K562 (cell line): ENCODE measurements at regions of chr9 and their contacts with region 1.

Region 1: GRCh38 chr9:98860871-98861293 is 53.4 kb downstream of the GALNT12 start:
- DNase-seq: peak in 2 of 4 experiments; percentile 60 to 66
- ATAC-seq: peak; percentile 89
- H3K4me3 ChIP-seq: no peak overlapping the region
- H3K27ac ChIP-seq: no peak overlapping the region
- H3K4me1 ChIP-seq: peaks cover 0 to 13% of the 10 kb centered on the region in 2 experiments; a peak in 3 of 5 replicates
- H3K27me3 ChIP-seq: no peaks in the 10 kb centered on the region
- CTCF ChIP-seq: peak; percentile 70 to 84 (median 75)
- EP300 ChIP-seq: no peak
- POLR2A ChIP-seq: no peak
- RAD21 ChIP-seq: peak; percentile 96

Region 2: GRCh38 chr9:98654247-98654646 is 206.6 kb before region 1 on chr9:
- CTCF ChIA-PET with region 1: no interaction called
- POLR2A ChIA-PET with region 1: no interaction called
- in situ Hi-C with region 1: no loop called
- intact Hi-C with region 1: no loop called
- DNase-seq: no peak
- ATAC-seq: no peak
- H3K4me3 ChIP-seq: no peak overlapping the region
- H3K27ac ChIP-seq: no peak overlapping the region
- H3K4me1 ChIP-seq: no peaks in the 10 kb centered on the region
- H3K27me3 ChIP-seq: peaks cover 18 to 26% of the 10 kb centered on the region in 2 experiments
- CTCF ChIP-seq: no peak
- EP300 ChIP-seq: no peak
- POLR2A ChIP-seq: no peak
- RAD21 ChIP-seq: no peak

Region 3: DNA sequence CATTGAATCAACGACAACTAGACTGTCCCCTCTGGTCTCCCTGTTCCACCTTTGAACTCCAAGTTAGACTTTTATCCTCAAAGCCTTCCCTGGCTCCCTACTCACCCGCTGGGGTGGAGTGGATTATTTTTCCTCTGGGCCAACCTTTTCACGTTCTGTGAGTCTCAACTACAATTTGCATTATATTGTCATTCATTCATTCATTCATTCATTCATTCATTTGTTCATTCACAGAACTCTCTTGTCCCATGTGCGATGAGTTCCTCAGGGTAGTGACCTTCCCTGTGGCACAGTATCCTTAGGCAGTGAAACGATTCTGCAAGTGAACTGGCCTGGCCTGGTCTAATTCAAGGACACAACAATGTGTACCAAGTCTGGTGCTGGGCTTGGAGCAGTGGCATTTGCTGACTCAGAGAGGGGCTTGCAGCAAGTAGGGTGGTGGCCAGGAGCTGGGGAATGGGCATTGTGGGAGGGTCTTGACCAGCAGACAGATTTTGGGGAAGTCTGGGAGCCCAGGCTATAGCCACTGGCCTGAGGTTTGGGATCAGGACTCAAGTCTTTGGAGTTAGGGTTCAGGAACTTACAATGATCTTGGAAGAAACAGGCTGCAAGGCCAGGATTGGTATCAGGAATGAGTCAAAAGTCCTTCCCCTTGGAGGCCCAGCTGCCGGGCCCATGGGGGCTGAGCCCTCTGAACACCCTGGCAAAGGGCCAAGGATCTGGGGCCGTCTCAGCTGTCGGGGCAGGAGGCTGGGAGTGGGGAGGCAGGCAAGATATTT is 45.6 kb after region 1 on chr9:
- CTCF ChIA-PET with region 1: no interaction called
- POLR2A ChIA-PET with region 1: no interaction called
- in situ Hi-C with region 1: no loop called
- intact Hi-C with region 1: loop called (anchors 2 kb)
- DNase-seq: peak; percentile 63 to 84 (median 68)
- ATAC-seq: peak; percentile 68
- H3K4me3 ChIP-seq: no peak overlapping the region
- H3K27ac ChIP-seq: no peak overlapping the region
- H3K4me1 ChIP-seq: peaks cover 7 to 39% of the 10 kb centered on the region in 2 experiments
- H3K27me3 ChIP-seq: no peaks in the 10 kb centered on the region
- CTCF ChIP-seq: no peak
- EP300 ChIP-seq: no peak
- POLR2A ChIP-seq: no peak
- RAD21 ChIP-seq: no peak

Region 4: DNA sequence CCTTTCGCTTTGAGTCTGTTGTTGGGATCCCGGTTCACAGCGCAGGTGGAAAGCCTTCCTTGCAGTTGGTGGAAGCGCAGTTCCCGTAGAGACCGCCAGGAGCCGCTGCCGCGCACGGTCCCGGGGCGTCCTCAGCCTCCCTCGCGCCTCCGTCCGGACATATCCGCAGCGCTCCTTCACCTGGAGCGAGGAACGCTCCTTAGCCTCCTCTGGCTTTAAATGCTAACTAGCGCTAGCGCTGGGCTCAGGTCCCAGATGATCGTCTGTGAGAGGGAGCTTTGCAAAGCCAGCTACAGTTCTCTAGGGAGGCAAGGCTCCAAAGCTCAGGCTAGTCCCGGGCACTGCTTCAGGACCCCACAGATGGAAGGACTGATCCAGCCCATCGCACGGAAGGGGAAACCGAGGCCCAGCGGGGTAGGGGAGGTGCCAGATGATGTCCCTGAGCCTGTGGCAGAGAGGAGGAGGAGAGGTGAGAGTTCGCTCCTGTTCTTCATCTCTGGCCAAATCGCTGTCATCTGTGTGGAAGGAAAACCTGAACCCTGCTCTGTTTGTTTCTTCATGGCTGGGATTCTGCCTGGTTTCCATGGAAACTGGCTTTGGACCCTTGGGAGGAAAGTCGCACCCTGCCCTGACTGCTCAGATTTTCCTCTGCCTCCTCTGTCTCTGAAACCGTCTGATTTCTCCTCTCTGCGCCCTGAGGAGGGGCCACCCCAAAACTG is 114.3 kb after region 1 on chr9:
- CTCF ChIA-PET with region 1: interaction called, 4 read pairs
- POLR2A ChIA-PET with region 1: no interaction called
- in situ Hi-C with region 1: no loop called
- intact Hi-C with region 1: loop called (anchors 1 kb)
- DNase-seq: peak; percentile 88 to 91 (median 90)
- ATAC-seq: peak; percentile 92
- H3K4me3 ChIP-seq: peak overlapping the region; percentile 25; the same call in 1 of the 2 replicates
- H3K27ac ChIP-seq: no peak overlapping the region
- H3K4me1 ChIP-seq: peaks cover 27% of the 10 kb centered on the region in 2 experiments; a peak in 4 of 5 replicates
- H3K27me3 ChIP-seq: no peaks in the 10 kb centered on the region
- CTCF ChIP-seq: peak; percentile 99
- EP300 ChIP-seq: no peak
- POLR2A ChIP-seq: no peak
- RAD21 ChIP-seq: peak; percentile 81 to 90

Region 5: DNA sequence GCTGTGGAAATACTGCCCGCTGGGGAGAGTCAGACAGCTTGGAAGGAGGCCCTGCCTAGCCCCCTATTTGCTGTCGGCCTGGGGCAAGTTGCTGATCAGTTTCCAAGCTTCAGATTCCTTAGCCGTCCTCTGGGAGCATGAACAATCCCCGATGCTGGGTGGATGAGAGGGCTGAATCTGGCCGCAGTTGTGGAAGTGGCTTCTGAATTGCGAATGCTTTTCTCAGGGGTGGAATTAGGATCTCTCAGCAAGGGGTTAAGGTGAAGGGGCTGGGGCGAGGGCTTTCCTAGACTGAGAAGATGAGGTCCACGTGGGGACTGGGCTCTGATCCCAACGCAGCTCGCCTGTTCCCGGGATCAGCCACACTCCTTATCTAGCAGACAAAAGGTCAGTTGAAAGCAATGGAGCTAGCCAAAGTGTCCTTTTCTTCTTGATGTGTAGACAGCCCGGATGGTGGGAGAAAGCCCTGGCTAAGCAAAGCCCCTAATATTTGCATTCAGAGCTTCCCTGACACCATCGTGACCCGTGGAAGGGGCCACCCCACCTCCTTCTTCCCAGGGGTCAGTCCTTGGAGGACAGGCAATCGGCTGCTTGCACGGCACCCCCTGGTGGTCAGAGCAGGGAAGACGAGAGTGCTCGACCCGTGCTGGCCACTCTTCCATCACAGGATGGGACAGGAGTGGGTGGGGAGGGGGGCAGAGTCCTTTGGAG is 137.7 kb after region 1 on chr9:
- CTCF ChIA-PET with region 1: interaction called, 14 read pairs
- POLR2A ChIA-PET with region 1: no interaction called
- in situ Hi-C with region 1: no loop called
- intact Hi-C with region 1: loop called (anchors 1 kb)
- DNase-seq: peak; percentile 83 to 87 (median 86)
- ATAC-seq: peak; percentile 98
- H3K4me3 ChIP-seq: no peak overlapping the region
- H3K27ac ChIP-seq: no peak overlapping the region
- H3K4me1 ChIP-seq: peaks cover 24 to 27% of the 10 kb centered on the region in 2 experiments
- H3K27me3 ChIP-seq: 0 out of 5 replicates have a peak, but pooled peaks cover 0 to 4% of the 10 kb centered on the region in 2 experiments
- CTCF ChIP-seq: peak; percentile 85 to 96 (median 93)
- EP300 ChIP-seq: no peak
- POLR2A ChIP-seq: no peak
- RAD21 ChIP-seq: peak; percentile 92 to 97

Region 6: DNA sequence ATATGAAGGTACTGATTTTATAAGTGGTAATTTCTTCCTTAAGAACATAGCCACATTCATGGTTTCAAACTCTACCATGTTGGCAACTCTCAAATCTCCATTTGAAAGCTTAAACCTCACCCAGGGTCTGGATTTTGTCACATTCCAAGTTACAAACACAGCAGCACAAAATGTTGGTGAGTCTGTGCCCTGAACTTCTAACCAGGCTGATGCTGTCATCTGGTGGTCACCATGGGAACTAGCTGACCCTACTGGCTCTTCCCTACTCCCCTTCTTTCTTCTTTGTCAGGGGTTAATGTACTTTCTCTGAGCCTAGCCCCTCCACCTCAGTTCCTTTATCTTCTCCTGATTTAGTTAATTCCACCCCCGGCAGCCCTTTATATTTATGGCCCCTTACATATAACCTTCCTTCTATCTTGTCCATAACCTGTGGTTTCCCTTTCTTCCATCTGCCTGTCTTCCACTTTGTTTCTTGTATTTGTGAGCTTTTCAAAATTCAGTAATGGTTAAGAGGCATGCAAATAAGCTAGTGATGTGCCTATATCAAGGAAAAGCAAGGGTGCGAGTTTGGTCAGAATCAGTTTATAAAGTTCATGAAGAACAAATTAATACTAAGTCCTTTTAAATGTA is 279.9 kb after region 1 on chr9:
- CTCF ChIA-PET with region 1: interaction called, 5 read pairs
- POLR2A ChIA-PET with region 1: no interaction called
- in situ Hi-C with region 1: no loop called
- intact Hi-C with region 1: loop called (anchors 1 kb)
- DNase-seq: peak; percentile 60 to 70 (median 66)
- ATAC-seq: peak; percentile 96
- H3K4me3 ChIP-seq: no peak overlapping the region
- H3K27ac ChIP-seq: no peak overlapping the region
- H3K4me1 ChIP-seq: peaks cover 0 to 15% of the 10 kb centered on the region in 2 experiments; a peak in 3 of 5 replicates
- H3K27me3 ChIP-seq: no peaks in the 10 kb centered on the region
- CTCF ChIP-seq: peak; percentile 85 to 88 (median 86)
- EP300 ChIP-seq: no peak
- POLR2A ChIP-seq: no peak
- RAD21 ChIP-seq: peak; percentile 94 to 97